ENCODE measurements at regions of chr15 and their contacts with region 1.

Region 1: DNA sequence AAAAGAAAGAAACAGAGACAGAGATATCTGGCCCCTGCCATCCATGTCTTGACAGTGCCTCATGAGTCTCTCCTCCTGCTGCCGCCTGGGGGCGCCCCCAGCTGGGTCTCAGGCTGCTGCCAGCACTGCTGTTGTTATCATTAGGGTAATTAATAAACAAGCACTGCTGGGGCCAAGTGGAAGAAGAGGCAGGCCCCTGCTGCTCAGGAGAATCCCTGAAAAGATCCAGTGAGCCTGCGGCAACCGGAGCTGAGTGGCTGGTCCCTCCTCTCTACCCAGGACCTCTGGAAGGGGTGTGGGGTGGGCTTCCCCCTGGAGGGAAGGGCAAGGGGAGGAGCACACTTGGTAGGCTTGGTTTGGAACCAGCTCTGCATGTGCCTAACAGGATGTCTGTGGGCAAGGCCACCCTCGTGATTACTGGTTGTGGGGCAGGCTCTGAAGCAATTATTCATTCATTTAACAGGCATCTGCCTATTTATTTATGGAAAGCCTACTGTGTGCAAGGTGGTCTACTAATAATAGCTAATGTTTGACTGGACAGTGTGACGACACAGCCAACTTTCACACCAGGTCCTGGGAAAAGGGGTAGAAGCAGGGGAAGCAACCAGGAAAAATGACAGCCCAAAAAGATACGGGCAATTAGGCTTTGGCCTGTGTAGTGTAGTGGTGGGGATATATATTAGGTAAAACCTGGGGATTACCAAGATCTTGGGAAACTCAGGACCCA is 1.2 kb upstream of the TYRO3 start:
- DNase-seq: peak; percentile 43
- H3K4me3 Mint-ChIP-seq: peak overlapping the region; percentile 92
- H3K27ac Mint-ChIP-seq: peak overlapping the region; percentile 89
- H3K4me1 Mint-ChIP-seq: peaks cover 19% of the 10 kb centered on the region
- H3K27me3 Mint-ChIP-seq: peaks cover 46% of the 10 kb centered on the region

Region 2: GRCh38 chr15:41544650-41545015 is 13.2 kb before region 1 on chr15:
- intact Hi-C with region 1: loop called (anchors 1 kb)
- DNase-seq: no peak
- H3K4me3 Mint-ChIP-seq: peak overlapping the region; percentile 97
- H3K27ac Mint-ChIP-seq: no peak overlapping the region
- H3K4me1 Mint-ChIP-seq: peaks cover 17% of the 10 kb centered on the region
- H3K27me3 Mint-ChIP-seq: no peaks in the 10 kb centered on the region

Region 3: DNA sequence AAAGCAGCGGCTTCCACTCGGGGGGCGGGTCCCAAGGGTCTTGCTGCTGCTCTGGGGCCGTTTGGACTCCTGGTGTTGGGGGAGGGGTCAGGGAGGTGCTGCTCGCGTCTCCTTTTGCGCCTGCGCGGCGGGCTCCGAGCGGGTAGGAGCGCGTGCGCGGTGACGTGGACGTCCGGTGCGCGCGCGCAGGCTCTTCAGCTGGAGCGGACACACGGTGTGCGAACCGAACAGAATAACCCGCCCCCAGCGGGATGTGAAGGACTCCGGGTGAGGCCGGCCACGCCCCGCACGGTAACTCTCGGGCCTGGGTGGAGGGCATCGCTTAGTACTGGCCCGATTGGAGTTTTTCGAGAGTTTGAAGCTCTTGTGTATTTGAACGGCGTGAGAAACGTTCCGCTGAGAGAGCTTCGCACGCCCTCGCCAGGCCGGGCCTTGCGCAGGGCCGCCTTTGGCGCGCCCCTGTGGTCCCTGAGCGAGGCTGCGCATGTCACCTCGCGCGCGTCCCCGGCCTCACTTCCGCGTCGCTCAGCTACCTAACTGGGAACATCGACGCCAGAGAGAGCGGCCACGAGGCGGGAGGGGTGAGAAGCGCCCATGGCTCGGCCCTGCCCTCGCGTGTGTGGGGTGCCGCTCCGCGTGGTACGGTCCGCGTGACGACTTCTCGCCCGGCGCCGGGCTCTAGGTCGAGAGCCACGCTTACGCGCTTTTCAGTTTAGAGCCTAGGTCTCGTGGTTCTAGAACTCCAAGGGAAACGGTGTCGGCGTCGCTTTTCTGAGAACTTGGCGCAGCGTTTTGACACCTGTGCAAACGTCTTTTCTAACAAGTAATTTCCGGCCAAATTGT is 102.6 kb after region 1 on chr15 and contains the start of gene MGA:
- intact Hi-C with region 1: loop called (anchors 2 kb)
- DNase-seq: peak; percentile 88
- H3K4me3 Mint-ChIP-seq: peak within 1 kb of the TSS; percentile 90
- H3K27ac Mint-ChIP-seq: peak within 1 kb of the TSS; percentile 91
- H3K4me1 Mint-ChIP-seq: peaks cover 37% of the 10 kb centered on the region
- H3K27me3 Mint-ChIP-seq: peaks cover 28% of the 10 kb centered on the region
- total RNA-seq, gene MGA: 37.5 and 38.8 TPM in 2 replicates

Region 4: DNA sequence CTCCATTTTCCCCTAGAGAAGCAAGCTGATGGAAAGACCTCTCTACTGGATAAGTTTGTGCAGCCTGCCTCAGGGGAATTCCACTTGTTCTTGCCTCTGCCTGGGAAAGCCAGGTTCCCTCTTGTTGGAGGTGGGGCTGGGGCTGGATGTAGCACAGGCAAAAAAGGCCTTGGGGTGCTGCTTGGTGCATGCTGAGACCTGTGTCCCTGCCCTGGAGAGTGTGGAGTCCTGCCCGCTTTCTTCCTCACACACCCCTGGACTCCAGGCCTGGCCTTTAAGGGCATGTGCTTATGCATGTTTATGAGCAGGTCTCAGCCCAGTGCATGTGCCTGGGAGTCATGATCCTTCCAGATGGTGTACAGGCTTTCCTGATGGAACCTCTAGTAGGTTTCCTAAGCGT is 246.5 kb after region 1 on chr15:
- intact Hi-C with region 1: no loop called
- DNase-seq: no peak
- H3K4me3 Mint-ChIP-seq: no peak overlapping the region
- H3K27ac Mint-ChIP-seq: no peak overlapping the region
- H3K4me1 Mint-ChIP-seq: peaks cover 17% of the 10 kb centered on the region
- H3K27me3 Mint-ChIP-seq: no peaks in the 10 kb centered on the region

Region 5: DNA sequence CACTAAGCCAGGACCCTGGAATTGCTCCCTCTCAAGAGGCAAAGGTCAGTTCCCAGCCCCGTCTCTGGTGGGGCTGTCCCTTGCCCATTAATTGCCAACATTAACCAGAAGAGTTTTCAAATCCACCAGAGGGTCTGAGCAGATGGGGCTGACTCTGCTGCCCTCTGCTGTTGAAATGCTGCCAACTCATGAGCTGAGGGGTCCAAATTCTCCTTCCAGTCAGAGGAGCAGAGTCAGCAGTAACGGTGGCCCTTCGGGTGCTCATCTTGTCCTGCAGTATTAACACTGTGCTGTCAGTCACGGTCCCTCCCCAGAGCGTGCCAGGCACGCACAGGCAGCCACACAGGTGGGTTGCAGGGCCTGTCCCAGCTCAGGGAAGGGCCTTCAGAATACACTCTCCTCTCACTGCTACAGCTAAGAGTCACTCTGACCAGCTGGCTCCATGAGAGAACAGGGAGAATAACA is 346.7 kb after region 1 on chr15:
- intact Hi-C with region 1: loop called (anchors 10 kb)
- DNase-seq: peak; percentile 50
- H3K4me3 Mint-ChIP-seq: no peak overlapping the region
- H3K27ac Mint-ChIP-seq: no peak overlapping the region
- H3K4me1 Mint-ChIP-seq: peaks cover 8% of the 10 kb centered on the region
- H3K27me3 Mint-ChIP-seq: no peaks in the 10 kb centered on the region

Measured in activated T-helper 1 cell treated with anti-CD3 and anti-CD28 coated beads, Interleukin-12 subunit alpha, Interleukin-12 subunit beta, Interleukin-2, Interleukin-4 antibody, amounts not matched to agents 30 ng/mL and 10 ng/mL and 1 ng/mL, durations not matched to agents 14 hours and 24 hours and 36 hours (primary cell).